ENCODE measurements at regions of chr3 and their contacts with region 1.

Region 1: DNA sequence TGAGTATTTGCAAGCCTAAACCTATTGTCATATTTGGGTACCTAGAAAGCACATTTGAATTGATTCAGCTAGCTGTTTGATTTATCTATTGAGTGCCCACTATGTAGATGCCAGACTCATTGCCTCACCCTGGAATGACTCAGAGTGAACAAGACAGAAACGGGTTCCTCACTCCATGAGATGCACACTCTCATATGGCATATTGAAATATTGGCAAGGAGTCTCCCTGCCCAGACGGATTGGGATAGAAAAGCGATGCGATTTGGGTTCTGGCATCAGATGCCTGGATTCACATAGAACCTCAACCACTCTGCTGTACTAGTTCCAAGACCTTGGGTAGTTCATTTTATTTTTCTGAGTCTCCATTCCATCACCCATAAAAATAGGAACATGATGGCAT is 22.5 kb downstream of the LRRN1 start:
- DNase-seq: no peak
- ATAC-seq: no peak
- H3K4me3 ChIP-seq: no peak overlapping the region
- H3K4me1 ChIP-seq: no peaks in the 10 kb centered on the region
- CTCF ChIP-seq: no peak

Region 2: GRCh38 chr3:3792371-3792770 is 29.4 kb before region 1 on chr3:
- intact Hi-C with region 1: loop called in 1 of 2 experiments (anchors 2 kb)
- DNase-seq: no peak
- ATAC-seq: no peak
- H3K4me3 ChIP-seq: no peak overlapping the region
- H3K4me1 ChIP-seq: no peaks in the 10 kb centered on the region
- CTCF ChIP-seq: no peak

Measured in mucosa of descending colon (tissue), 3 donors.